ENCODE measurements at regions of chr14 and their contacts with region 1.

Region 1: DNA sequence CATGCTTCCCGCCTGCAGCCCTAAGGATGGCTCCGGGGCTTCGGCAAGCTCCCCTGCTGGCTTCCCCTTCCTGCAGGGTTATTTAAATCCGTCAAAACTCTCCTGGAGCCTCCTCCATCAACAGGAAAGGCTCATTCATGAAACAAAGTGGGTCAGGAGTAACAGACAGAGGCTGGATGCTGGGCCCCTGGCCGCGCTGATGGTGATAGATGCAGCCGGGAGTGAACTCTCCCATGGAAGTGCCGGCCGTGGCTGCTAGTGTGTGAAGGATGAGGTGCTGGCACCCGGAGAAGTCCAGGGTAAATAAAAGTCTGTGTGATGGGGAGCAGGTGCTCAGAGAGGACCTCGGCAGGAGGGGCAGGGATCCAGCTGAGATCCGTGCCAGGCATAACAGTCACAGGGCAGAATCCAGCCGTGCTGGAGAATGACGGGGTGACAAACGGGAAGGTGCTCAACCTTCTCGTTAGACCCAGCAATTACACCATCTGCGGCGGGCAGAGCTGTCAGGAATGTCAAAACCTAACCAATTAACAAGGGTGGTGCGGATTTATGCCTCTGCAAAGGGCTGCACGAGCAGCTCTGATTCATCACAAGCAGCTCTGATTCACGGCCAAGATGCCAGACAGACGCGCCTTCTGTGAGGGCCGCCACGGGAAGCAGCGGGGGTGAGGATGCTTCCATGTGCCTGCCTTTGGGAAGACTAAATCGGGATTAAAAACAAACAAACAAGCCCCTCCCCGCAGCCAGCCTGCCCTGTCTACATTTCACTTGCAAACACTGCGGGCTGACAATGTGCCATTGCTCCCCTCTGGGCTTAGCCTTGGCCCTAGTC is 55.6 kb downstream of the SYNE3 start:
- DNase-seq: no peak
- ATAC-seq: no peak
- H3K4me3 Mint-ChIP-seq: peak overlapping the region in 6 of 10 donors; percentile 28 to 66 (median 39)
- H3K27ac Mint-ChIP-seq: peak overlapping the region; percentile 96 to 100 (median 99)
- H3K4me1 Mint-ChIP-seq: peaks cover 37 to 64% (median 58%) of the 10 kb centered on the region in 4 donors
- H3K27me3 Mint-ChIP-seq: no peaks in the 10 kb centered on the region

Region 2: GRCh38 chr14:95374239-95374997 is 86.4 kb before region 1 on chr14:
- POLR2A ChIA-PET with region 1: no interaction called
- DNase-seq: no peak
- ATAC-seq: no peak
- H3K4me3 Mint-ChIP-seq: no peak overlapping the region
- H3K27ac Mint-ChIP-seq: peak overlapping the region in 2 of 10 donors; percentile 10 to 27
- H3K4me1 Mint-ChIP-seq: peaks cover 0 to 3% (median 0%) of the 10 kb centered on the region in 4 donors
- H3K27me3 Mint-ChIP-seq: peaks cover 8 to 46% (median 20%) of the 10 kb centered on the region in 5 donors

Region 3: DNA sequence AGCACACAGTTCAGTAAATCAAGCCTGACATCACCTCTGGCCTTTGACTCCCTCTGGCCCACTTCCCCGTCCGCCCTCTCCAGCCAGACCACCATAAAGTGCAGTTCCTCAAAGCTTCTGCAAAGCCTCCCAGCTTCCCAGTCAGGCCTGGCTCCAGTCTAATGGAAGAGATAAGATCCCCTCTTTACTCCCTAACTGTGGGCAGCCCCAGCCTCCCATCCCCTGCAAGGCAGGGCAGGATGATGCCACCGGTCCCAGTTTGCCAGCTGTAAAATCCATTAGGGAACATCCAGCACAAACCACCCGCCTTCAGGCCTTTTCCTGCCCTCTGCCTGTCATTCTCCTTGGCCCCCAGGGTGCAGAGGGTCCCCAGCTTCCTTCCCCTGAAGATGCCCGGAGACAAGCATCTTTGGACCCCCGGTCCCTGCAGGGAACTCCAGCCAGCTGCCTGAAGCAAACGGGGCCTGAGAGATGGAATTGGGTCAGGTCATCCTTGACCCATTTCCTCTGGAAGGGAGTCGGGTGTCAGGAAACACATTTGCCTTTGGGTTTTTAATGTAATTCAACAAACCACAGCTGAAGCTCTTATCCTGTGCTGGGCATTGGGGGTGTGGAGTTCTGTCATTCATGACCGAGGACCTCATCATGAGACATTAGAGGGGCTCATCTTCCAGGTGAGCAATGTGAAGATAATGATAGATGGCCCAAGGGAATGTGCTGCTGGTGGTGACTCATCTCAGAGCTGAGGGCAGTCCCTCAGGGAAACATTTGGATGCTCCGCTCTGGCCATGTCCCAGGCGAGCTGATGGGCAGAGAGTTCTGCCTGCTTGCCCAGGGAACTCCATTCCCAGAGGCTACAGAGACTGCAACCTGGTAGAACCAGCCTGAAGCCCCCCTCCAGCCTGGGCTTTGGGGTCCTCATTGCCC is 47.3 kb before region 1 on chr14:
- POLR2A ChIA-PET with region 1: no interaction called
- DNase-seq: no peak
- ATAC-seq: no peak
- H3K4me3 Mint-ChIP-seq: no peak overlapping the region
- H3K27ac Mint-ChIP-seq: peak overlapping the region in 3 of 10 donors; percentile 3 to 81 (median 56)
- H3K4me1 Mint-ChIP-seq: peaks cover 0 to 2% (median under 1%) of the 10 kb centered on the region in 4 donors
- H3K27me3 Mint-ChIP-seq: no peaks in the 10 kb centered on the region

Region 4: DNA sequence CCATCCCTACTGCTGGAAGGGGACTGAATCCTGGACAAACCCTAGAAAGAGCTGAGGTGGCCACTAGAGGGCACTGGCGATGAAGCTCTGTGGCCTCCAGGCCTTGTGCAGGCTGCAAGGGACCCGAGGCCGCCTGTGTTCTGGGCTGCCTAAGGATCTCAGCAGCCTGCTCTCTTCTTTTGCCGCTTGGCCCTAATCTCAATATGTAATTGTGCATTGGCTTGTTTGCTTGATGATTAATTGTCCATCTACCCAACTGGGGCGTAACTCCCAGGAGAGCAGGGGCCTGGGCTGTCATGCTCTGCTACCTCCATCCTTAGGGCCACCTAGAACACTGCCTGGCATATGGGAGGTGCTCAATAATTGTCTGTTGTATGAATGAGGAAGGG is 18.2 kb before region 1 on chr14:
- POLR2A ChIA-PET with region 1: interaction called, 34 read pairs
- DNase-seq: peak; percentile 54 to 88 (median 70)
- ATAC-seq: peak; percentile 99
- H3K4me3 Mint-ChIP-seq: no peak overlapping the region
- H3K27ac Mint-ChIP-seq: peak overlapping the region; percentile 3 to 93 (median 66)
- H3K4me1 Mint-ChIP-seq: peaks cover 4 to 16% (median 8%) of the 10 kb centered on the region in 4 donors
- H3K27me3 Mint-ChIP-seq: no peaks in the 10 kb centered on the region

Region 5: GRCh38 chr14:95472819-95473251 is 12.0 kb after region 1 on chr14:
- POLR2A ChIA-PET with region 1: interaction called, 53 read pairs
- DNase-seq: peak in 2 of 10 donors; percentile 27 to 29
- ATAC-seq: peak; percentile 58 to 70
- H3K4me3 Mint-ChIP-seq: peak overlapping the region in 9 of 10 donors; percentile 46 to 84 (median 73)
- H3K27ac Mint-ChIP-seq: peak overlapping the region; percentile 60 to 97 (median 92)
- H3K4me1 Mint-ChIP-seq: peaks cover 38 to 75% (median 54%) of the 10 kb centered on the region in 4 donors
- H3K27me3 Mint-ChIP-seq: no peaks in the 10 kb centered on the region

Region 6: DNA sequence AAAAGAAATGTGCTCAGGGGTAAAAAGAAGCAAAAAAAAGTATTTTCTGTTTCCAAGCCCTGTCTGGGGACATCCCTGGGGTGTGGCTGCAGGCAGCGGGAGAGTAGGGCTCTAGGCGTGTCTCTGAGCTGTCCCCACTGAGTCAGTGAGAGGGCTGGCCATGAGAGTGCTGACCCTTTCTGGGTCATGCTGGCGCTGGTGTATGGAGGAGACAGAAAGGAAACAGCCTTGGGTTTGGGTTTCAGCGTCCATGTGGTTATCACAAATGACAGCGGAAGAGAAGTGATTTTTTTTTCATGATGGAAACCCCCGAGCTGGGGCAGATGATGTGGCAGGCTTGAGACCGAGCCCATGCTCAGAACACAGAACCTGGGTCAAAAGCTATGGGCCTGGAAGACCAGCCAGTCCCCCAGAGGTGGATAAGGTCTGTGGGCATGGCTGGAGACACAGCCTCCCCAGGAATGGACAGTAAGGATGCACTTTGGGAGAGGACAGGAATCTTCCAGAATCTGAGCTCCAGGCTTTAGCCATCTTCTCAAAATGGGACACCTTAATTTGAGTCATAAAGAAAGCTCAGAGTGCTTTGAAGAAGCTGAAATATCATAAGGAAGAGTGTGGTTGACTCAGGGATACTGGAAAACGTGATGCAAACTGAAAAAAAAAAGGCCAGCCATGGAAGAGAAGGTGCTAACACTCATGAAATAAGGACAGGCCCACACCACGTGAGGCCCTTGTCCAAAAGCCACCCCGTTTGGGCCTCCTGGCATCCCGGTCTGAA is 19.4 kb after region 1 on chr14:
- POLR2A ChIA-PET with region 1: interaction called, 28 read pairs
- DNase-seq: no peak
- ATAC-seq: peak; percentile 30 to 62
- H3K4me3 Mint-ChIP-seq: peak overlapping the region in 4 of 10 donors; percentile 5 to 55 (median 31)
- H3K27ac Mint-ChIP-seq: peak overlapping the region in 9 of 10 donors; percentile 63 to 87 (median 79)
- H3K4me1 Mint-ChIP-seq: peaks cover 29 to 67% (median 60%) of the 10 kb centered on the region in 4 donors
- H3K27me3 Mint-ChIP-seq: no peaks in the 10 kb centered on the region

Region 7: DNA sequence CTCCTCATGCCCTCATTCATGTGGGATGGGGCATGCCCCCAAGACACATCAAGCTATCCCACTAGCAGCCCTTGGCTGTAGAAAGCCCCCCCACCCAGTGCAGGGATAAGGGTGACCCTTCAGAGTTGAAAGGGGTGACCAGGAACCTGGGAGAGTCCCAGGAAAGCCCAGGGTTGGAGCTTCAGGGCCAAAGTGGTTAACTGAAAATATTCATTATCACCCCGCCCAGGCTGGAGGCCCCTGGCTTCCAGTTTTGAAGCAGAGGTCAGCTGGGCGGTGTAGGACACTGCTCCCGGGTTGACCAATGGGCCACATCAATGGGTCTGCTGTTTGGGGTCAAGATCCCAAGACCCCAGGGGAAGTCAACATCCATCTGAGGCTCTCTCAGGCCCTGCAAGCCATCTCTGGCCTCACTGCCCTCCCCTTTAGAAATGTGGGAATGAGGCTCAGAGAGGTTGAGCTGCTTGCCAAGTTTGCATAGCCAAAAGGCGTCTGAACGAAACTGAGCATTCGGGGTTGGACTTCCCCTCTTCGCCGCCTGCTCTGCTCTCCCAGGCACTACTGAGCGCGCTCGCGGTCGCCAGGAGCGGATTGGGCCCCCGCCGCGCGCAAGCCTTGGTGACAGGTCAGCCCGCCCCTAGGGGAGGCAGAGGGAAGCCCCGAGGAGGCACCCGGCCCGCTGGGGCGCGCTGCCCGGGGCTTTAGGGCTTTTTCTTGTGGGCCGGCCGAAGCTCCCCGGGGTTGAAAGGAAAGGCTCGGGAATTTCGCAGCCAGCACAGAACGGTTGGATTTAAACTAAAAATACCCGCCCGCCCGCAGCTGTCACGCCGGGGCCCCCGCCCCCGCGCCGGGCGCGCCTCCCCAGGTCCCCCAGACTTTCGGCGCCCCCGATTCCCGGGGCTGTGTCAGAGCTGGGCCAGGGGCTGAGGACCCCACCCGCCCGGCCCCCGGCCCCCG is 55.0 kb after region 1 on chr14:
- POLR2A ChIA-PET with region 1: interaction called, 398 read pairs
- DNase-seq: peak; percentile 76 to 85 (median 79)
- ATAC-seq: peak; percentile 81 to 93
- H3K4me3 Mint-ChIP-seq: peak overlapping the region; percentile 86 to 95 (median 88)
- H3K27ac Mint-ChIP-seq: peak overlapping the region; percentile 80 to 96 (median 91)
- H3K4me1 Mint-ChIP-seq: peaks cover 44 to 77% (median 74%) of the 10 kb centered on the region in 4 donors
- H3K27me3 Mint-ChIP-seq: no peaks in the 10 kb centered on the region

Region 8: DNA sequence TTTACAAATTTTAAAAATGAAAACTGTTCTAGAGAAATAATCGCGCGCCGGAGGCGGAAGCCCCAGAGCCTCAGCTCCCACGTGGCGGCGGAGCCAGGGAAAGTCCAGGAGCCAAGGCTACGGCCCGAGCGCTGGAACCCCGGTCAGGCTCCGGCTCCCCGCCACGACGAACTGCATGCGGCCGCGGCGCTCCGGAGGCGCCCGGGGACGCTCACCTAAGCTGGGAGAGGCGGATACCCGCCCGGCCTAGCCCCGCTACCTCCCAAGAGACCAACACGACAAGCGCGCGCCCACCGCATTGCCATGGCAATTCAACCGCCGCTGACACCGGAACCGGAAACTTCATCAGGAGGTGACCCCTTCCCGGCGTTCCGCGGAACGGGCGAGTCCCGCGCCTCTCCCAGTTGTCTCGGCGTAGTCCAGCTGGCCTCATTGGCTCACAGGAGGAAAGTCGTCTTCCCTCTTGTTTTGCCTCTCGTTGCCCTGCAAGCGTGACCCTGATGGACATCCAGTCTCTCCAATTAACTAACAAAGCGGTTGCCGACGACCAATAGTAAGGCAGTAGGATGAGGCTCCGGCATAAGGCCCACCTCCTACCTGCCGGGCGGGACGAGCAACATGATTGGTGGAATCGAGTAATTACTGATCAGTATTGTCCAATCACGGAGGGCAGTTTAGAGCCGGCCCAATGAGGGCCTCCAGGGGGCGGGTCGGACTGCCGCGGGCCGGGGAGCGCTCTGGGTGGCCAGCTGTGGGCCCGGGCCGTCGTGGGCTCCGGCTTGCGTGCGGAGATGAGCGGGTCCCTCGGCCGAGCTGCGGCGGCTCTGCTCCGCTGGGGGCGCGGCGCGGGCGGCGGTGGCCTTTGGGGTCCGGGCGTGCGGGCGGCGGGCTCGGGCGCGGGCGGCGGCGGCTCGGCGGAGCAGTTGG is 73.7 kb after region 1 on chr14 and contains the start of gene GLRX5:
- POLR2A ChIA-PET with region 1: interaction called, 37 read pairs
- DNase-seq: peak; percentile 92 to 100 (median 98)
- ATAC-seq: peak; percentile 86 to 87
- H3K4me3 Mint-ChIP-seq: peak within 1 kb of the TSS; percentile 85 to 98 (median 96)
- H3K27ac Mint-ChIP-seq: peak within 1 kb of the TSS; percentile 93 to 98 (median 96)
- H3K4me1 Mint-ChIP-seq: peaks cover 33 to 78% (median 69%) of the 10 kb centered on the region in 4 donors
- H3K27me3 Mint-ChIP-seq: no peaks in the 10 kb centered on the region
- polyA plus RNA-seq, gene GLRX5: 61.6 to 87.6 (median 67.6) TPM

Region 9: GRCh38 chr14:95597784-95598211 is 136.9 kb after region 1 on chr14:
- POLR2A ChIA-PET with region 1: no interaction called
- DNase-seq: no peak
- ATAC-seq: no peak
- H3K4me3 Mint-ChIP-seq: peak overlapping the region in 1 of 10 donors; percentile 49
- H3K27ac Mint-ChIP-seq: no peak overlapping the region
- H3K4me1 Mint-ChIP-seq: peaks cover 0 to 3% (median under 1%) of the 10 kb centered on the region in 4 donors
- H3K27me3 Mint-ChIP-seq: peaks cover 18 to 31% (median 24%) of the 10 kb centered on the region in 5 donors

Measured in naive thymus-derived CD8-positive, alpha-beta T cell (primary cell).